Vagina (tissue), 2 donors: ENCODE measurements at regions of chr3 and their contacts with region 1.

Region 1: GRCh38 chr3:17412950-17413530 is 329.4 kb downstream of the TBC1D5 start:
- DNase-seq: no peak
- H3K4me3 ChIP-seq: no peak overlapping the region
- H3K27ac ChIP-seq: no peak overlapping the region
- H3K4me1 ChIP-seq: no peaks in the 10 kb centered on the region
- H3K27me3 ChIP-seq: no peaks in the 10 kb centered on the region
- CTCF ChIP-seq: peak in 2 of 3 experiments; percentile 51 to 65
- POLR2A ChIP-seq: no peak

Region 2: GRCh38 chr3:17261633-17262369 is 151.2 kb before region 1 on chr3:
- intact Hi-C with region 1: loop called (anchors 5 kb)
- DNase-seq: no peak
- H3K4me3 ChIP-seq: no peak overlapping the region
- H3K27ac ChIP-seq: no peak overlapping the region
- H3K4me1 ChIP-seq: no peaks in the 10 kb centered on the region
- H3K27me3 ChIP-seq: no peaks in the 10 kb centered on the region
- CTCF ChIP-seq: no peak
- POLR2A ChIP-seq: no peak